BJ (cell line): ENCODE measurements at regions of chr11 and their contacts with region 1.

Region 1: DNA sequence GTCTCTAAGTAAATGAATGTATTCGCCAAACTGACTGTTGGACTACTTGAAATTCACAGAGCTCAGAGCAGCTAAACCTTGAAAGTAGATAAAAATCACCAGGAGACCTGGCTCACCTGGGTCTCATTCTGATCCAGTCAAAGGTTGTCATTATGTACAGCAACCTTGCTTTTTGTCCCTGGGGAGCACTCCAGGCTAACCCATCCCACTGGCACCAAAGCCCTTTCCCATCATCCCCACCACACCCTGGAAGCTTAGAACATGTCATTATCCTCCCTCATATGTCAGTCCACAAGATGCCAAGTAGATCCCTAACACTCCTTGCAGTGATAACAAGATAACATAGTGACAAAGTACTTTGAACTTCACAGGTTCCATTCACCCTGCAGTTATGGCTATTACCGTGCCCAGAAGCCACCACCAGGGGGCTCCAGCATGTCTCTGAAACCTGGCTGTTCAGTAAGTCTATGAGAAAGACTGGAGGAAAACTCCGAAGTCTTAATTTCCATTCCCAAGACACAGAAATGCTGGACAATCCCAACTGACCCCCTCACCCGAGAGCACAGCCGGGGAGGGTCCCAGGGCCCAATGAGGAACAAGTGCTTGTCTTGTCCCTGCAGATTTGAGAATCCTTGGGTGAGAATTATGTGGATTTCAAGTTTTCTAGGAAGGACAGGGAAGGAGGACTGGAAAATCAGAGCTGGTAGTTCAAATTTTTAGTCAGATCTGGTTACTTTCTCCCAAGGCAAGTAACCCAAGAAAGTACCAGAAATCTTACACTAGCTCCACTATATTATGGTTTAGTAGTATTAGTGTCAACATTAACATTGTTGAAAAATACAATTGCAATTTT is 43.0 kb upstream of the USP47 start:
- DNase-seq: no peak
- H3K4me3 ChIP-seq: no peak overlapping the region
- H3K27me3 ChIP-seq: peaks cover 2% of the 10 kb centered on the region; the same call in 1 of the 2 replicates
- CTCF ChIP-seq: peak; percentile 94

Region 2: DNA sequence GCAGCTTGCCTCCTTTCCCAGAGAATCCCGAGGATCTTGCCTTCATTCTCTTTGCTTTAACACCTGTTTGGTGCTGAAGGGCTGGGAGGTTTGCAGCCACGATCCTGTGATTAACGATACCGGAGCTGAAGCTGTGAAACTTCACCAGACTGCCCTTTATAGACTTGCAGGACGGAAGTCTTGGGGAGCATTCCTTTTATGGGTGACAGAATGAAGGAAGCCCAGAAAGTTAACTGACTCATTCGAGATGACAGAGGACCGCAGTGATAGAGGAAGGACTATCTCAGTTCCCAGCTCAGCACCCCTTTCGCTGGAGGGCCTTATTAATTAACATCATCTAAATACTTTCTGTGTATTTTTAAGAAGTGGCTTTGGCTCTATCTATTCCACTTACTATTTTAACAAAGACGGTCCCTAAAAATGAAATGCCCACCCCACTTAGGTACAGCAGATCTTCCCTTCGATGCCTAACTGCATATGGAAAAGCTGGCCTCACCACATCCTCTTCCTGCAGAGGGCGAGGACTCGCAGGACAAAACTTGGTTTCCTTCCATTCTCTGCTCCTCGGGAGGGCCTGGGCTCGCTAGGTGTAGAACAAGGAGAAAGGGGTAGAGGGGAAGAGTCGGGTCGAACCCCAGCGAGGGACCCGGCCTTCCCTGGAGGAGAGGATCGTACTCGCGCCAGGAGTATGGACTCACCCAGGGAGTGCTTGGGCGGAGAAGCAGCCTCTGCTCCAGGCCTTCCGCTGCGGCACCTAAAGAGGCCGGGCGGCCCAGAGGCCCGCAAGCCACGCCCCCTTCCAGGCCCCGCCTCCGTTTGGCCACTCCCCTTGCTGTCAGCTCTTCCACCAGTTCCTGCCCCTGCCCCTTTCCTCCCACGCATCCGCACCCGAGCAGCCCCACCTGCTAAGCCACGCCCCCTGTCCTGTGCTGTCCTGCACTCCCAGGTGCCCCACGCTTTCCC is 12.2 kb after region 1 on chr11:
- CTCF ChIA-PET with region 1: interaction called, 33 read pairs
- POLR2A ChIA-PET with region 1: no interaction called
- DNase-seq: no peak
- H3K4me3 ChIP-seq: no peak overlapping the region
- H3K27me3 ChIP-seq: no peaks in the 10 kb centered on the region
- CTCF ChIP-seq: no peak

Region 3: GRCh38 chr11:11909727-11910126 is 110.9 kb after region 1 on chr11:
- CTCF ChIA-PET with region 1: interaction called, 14 read pairs
- POLR2A ChIA-PET with region 1: no interaction called
- DNase-seq: peak; percentile 35
- H3K4me3 ChIP-seq: no peak overlapping the region
- H3K27me3 ChIP-seq: no peaks in the 10 kb centered on the region
- CTCF ChIP-seq: no peak